AG04449 (cell line): ENCODE measurements at regions of chr3 and their contacts with region 1.

Region 1: GRCh38 chr3:52238761-52239701 is at the start of gene TWF2:
- DNase-seq: no peak
- H3K4me3 ChIP-seq: peak within 1 kb of the TSS; percentile 95
- CTCF ChIP-seq: peak; percentile 43

Region 2: DNA sequence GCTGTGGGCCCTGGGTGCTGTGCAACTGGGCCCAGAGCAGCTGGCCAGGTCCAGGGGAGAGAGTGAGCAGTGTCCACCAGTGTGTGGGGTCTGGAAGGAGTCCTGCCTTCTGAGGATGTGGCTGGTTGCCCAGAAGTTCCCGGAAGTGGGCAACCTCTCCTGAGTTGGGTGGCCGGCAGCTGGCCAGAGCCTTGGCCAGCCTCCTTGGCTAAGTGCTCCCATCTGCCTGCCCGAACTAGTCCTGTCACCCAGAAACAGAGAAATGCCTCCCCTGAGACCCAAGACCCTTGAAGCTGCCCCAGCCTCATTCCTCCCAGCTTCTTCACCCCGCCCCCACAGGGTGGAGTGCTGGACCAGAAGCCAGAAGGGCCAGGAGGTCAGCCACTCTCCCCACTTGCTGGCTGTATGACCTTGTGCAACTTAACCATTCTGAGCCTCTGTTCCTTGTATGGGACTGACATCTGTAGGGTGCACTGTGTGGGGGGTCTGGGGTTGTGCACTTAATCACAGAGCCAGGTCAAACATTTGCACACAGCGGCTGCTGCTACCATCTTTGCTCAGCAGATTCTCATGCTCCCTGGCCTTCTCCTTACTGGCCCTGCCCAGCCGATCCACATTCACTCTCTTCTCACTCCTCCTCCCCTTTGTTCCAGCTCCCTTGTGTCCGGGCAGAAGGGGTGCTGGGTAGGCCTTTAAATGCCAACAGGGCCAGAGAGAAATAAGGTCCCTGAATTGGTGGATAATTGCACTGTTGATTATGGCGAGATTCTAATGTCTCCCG is 48.5 kb before region 1 on chr3:
- CTCF ChIA-PET with region 1: no interaction called
- POLR2A ChIA-PET with region 1: no interaction called
- DNase-seq: no peak
- H3K4me3 ChIP-seq: no peak overlapping the region
- CTCF ChIP-seq: no peak

Region 3: DNA sequence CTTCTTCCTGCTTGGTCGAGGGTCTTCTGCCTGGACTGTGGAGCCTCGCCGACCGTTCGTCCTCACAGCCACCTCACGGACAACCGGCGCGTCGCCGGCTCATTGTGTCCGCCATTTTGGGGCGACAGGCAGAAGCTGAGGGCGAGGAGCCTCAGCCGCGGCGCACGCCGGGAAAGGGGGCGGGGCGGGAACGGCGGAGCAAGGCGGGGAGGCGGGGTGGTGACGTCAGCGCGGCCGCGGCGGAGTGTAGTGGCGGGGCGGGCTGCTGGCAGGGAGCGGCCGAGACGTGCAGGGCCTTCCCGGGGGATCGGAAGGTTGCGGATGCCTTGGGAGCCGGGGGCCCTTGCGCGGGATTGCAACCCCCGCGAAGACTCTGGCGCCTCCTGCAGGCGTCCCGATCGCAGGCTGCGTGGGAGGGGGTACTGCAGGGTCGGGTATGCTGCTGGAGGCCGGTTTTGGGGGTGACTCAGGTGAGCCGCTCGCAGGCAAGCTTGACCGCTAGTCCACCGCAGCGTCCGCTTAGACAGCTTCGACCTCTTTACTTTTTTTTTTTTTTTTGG is 39.6 kb after region 1 on chr3 and contains the start of gene WDR82:
- CTCF ChIA-PET with region 1: interaction called, 7 read pairs
- POLR2A ChIA-PET with region 1: interaction called, 10 read pairs
- DNase-seq: peak; percentile 38
- H3K4me3 ChIP-seq: peak within 1 kb of the TSS; percentile 98
- CTCF ChIP-seq: peak; percentile 73